ENCODE measurements at regions of chr2 and their contacts with region 1.

Region 1: GRCh38 chr2:157194097-157194688 is 63.3 kb upstream of the GALNT5 start:
- DNase-seq: peak in 1 of 2 experiments; percentile 43
- H3K4me3 ChIP-seq: no peak overlapping the region
- H3K4me3 Mint-ChIP-seq: no peak overlapping the region
- H3K27ac Mint-ChIP-seq: no peak overlapping the region
- H3K4me1 ChIP-seq: no peaks in the 10 kb centered on the region
- H3K4me1 Mint-ChIP-seq: no peaks in the 10 kb centered on the region
- H3K27me3 ChIP-seq: no peaks in the 10 kb centered on the region
- H3K27me3 Mint-ChIP-seq: peaks cover 5% of the 10 kb centered on the region
- CTCF ChIP-seq: peak; percentile 61 to 63

Region 2: GRCh38 chr2:155368934-155369333 is 1825.3 kb before region 1 on chr2:
- CTCF ChIA-PET with region 1: no interaction called
- POLR2A ChIA-PET with region 1: no interaction called
- intact Hi-C with region 1: loop called (anchors 2 kb)
- DNase-seq: no peak
- H3K4me3 ChIP-seq: no peak overlapping the region
- H3K4me3 Mint-ChIP-seq: no peak overlapping the region
- H3K27ac Mint-ChIP-seq: no peak overlapping the region
- H3K4me1 ChIP-seq: no peaks in the 10 kb centered on the region
- H3K4me1 Mint-ChIP-seq: no peaks in the 10 kb centered on the region
- H3K27me3 ChIP-seq: no peaks in the 10 kb centered on the region
- H3K27me3 Mint-ChIP-seq: peaks cover 3% of the 10 kb centered on the region
- CTCF ChIP-seq: no peak

Region 3: DNA sequence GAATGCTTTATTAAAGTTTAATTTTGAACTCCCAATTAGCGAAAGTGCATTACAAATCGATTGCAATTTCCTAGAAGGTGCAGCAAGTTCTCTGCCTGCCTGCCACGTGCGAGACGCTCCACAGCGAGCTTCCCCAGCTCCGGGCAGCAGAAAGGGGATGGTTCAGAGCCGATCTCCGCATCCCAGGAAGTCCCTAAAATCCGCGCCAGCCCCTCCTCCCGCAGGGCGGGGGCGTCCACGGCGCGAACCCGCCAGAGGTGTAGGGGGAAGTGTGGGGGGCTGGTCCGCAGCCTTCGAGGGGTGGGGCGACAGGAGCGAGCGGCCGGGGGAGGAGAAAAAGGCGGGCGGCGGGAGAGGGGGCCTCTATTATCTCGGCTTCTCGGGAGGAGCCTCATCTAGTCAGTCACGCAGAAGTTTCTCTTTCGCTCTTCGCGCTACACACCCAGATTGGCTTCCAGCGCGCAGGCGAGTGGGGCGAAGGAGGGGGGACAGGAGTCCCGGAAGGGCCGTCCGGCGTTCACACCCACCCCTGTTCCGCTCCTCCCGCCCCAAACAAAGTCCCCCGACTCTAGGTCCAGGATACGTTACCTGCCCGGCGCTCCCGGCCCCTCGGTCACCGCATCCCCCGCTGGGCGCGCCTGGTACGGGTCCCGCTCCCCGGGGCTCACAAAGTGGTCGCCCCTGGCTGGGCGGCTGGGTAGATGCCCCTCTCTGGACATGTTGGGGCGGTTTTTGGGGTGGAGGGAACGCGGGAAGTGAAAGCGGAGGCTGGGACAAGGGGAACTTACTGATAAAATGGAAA is 852.5 kb before region 1 on chr2:
- CTCF ChIA-PET with region 1: no interaction called
- POLR2A ChIA-PET with region 1: no interaction called
- intact Hi-C with region 1: loop called (anchors 2 kb)
- DNase-seq: peak; percentile 83 to 92
- H3K4me3 ChIP-seq: peak overlapping the region; percentile 94
- H3K4me3 Mint-ChIP-seq: peak overlapping the region; percentile 87
- H3K27ac Mint-ChIP-seq: peak overlapping the region; percentile 88
- H3K4me1 ChIP-seq: peaks cover 9% of the 10 kb centered on the region; the same call in 1 of the 2 replicates
- H3K4me1 Mint-ChIP-seq: no peaks in the 10 kb centered on the region
- H3K27me3 ChIP-seq: no peaks in the 10 kb centered on the region
- H3K27me3 Mint-ChIP-seq: no peaks in the 10 kb centered on the region
- CTCF ChIP-seq: no peak

Region 4: GRCh38 chr2:156909983-156910382 is 284.2 kb before region 1 on chr2:
- CTCF ChIA-PET with region 1: no interaction called
- POLR2A ChIA-PET with region 1: no interaction called
- intact Hi-C with region 1: loop called (anchors 5 kb)
- DNase-seq: no peak
- H3K4me3 ChIP-seq: no peak overlapping the region
- H3K4me3 Mint-ChIP-seq: no peak overlapping the region
- H3K27ac Mint-ChIP-seq: no peak overlapping the region
- H3K4me1 ChIP-seq: no peaks in the 10 kb centered on the region
- H3K4me1 Mint-ChIP-seq: no peaks in the 10 kb centered on the region
- H3K27me3 ChIP-seq: no peaks in the 10 kb centered on the region
- H3K27me3 Mint-ChIP-seq: peaks cover 6% of the 10 kb centered on the region
- CTCF ChIP-seq: no peak

Region 5: DNA sequence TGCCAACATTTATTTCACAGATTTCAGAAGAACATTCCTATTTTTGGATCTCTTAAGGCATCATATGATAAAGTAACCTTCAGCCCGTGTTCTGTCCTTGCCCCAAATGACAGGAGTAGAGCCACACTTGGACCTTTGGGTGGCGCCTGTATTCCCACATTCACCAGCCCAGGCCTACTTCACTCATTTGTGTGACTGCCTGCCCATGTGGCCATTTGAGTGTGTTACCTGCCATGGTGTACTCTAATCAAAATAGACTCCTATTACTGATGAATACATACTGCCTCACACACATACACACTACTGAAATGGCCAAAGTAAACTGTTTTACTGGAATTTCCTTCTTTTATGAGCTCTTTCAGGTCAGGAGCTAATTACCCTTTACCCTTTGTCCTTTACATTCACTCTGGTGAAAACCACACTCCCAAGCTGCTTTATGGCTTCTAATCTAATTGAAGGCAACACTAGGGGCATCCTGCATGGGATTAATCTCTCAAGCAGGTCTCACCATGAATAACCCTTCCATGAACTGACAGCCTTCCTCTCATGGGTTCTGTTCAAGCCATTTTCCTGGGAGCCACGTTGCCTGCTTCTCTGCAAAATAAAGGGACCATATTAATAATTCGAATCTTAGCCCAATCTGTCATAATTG is 207.7 kb before region 1 on chr2:
- CTCF ChIA-PET with region 1: no interaction called
- POLR2A ChIA-PET with region 1: no interaction called
- intact Hi-C with region 1: loop called (anchors 1 kb)
- DNase-seq: peak; percentile 26 to 42
- H3K4me3 ChIP-seq: no peak overlapping the region
- H3K4me3 Mint-ChIP-seq: no peak overlapping the region
- H3K27ac Mint-ChIP-seq: no peak overlapping the region
- H3K4me1 ChIP-seq: no peaks in the 10 kb centered on the region
- H3K4me1 Mint-ChIP-seq: no peaks in the 10 kb centered on the region
- H3K27me3 ChIP-seq: no peaks in the 10 kb centered on the region
- H3K27me3 Mint-ChIP-seq: no peaks in the 10 kb centered on the region
- CTCF ChIP-seq: peak in 1 of 2 experiments; percentile 9

Region 6: DNA sequence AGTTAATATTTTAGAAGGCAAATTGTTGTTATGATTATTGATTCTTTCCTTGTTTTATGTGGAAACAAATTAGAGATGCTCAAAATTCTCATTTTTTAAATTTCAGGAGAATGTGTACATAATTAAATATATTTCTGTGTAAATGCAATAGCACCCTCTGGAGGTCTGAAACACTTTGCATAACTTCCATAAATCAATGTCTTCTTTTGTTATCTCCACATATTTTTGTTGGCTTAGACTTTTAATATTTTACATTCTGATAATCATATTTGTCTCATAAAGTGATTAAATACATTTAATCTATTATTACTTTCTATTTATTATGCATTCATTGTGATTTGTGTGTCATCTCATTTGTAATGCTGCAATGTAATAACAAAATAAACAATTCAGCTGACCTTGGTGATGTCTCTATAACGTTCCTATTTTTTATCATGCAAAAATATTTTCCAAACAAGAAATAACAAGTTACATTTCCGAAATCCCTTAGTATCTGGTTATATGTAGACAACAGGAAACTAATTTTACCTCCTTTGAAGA is 138.5 kb before region 1 on chr2:
- CTCF ChIA-PET with region 1: no interaction called
- POLR2A ChIA-PET with region 1: no interaction called
- intact Hi-C with region 1: loop called (anchors 5 kb)
- DNase-seq: peak in 1 of 2 experiments; percentile 13
- H3K4me3 ChIP-seq: no peak overlapping the region
- H3K4me3 Mint-ChIP-seq: no peak overlapping the region
- H3K27ac Mint-ChIP-seq: no peak overlapping the region
- H3K4me1 ChIP-seq: peaks cover 8% of the 10 kb centered on the region
- H3K4me1 Mint-ChIP-seq: peaks cover 7% of the 10 kb centered on the region
- H3K27me3 ChIP-seq: no peaks in the 10 kb centered on the region
- H3K27me3 Mint-ChIP-seq: no peaks in the 10 kb centered on the region
- CTCF ChIP-seq: peak; percentile 40 to 47